ENCODE measurements at regions of chrX and their contacts with region 1.

Region 1: DNA sequence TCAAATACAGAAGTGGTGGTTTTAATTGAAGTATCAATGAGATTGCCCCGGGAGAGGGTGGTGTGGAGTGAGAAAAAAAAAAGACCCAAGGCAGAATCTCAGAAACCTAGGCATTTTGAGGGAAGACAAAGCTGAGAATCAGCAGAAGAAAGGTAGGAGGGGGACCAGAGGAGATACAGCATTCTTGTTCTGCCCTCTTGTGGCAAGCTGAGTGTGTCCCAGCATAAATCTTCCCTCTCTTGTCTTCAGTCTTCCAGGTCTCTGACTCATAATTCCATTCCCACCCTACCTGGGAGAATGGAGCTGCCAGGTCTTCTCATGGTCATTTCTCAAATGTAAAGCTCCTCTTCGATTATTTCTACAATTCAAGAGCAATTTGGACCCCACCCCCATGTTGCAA is 32.7 kb upstream of the MAGED1 start:
- DNase-seq: no peak
- H3K4me3 ChIP-seq: no peak overlapping the region
- H3K27ac ChIP-seq: no peak overlapping the region
- H3K27me3 ChIP-seq: no peaks in the 10 kb centered on the region
- CTCF ChIP-seq: peak; percentile 46

Region 2: DNA sequence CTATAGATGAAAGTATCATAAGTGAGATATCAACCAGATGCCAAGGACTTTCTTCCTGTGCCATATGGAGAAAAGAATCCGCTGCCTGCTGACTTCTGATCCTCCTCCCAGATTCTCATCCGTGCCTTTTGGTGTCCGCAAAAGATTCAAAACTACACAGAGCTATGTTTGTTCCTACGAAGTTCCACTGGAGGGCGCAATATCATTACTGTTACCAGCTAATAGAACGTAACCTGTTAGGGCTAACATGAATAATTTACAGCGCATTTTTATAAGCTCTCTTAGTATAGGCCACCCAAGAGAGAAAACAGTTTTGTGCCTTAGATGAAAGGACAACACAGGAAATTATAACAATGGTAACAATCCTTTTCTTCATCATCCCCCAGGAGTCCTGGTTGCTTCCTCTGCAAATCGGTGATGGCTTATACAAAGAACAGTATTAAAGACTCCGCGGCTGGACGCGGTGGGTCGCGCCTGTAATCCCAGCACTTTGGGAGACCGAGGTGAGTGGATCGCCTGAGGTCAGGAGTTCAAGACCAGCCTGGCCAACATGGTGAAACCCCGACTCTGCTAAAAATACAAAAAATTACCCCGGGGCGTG is 219.2 kb before region 1 on chrX:
- CTCF ChIA-PET with region 1: interaction called, 14 read pairs
- POLR2A ChIA-PET with region 1: no interaction called
- DNase-seq: peak; percentile 18
- H3K4me3 ChIP-seq: no peak overlapping the region
- H3K27ac ChIP-seq: no peak overlapping the region
- H3K27me3 ChIP-seq: no peaks in the 10 kb centered on the region
- CTCF ChIP-seq: peak; percentile 51

Region 3: DNA sequence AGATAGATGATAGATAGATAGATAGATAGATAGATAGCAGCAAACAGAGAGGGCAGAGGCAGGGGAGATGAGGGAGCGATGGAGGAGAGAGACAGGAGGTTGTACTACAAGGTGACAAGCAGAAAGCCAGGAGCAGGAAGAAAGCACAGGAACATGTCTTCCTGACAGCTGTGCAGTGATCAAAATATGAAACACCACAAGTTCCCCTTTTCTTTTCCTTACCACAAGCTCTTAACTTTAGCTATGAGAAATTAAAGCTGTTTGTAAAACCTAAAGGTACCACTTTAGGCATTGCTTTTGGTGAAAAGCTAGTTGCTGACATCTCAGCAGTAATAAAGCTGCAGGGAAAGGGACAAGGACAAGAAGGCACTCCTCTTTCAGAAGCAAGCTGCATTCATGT is 217.5 kb after region 1 on chrX:
- CTCF ChIA-PET with region 1: no interaction called
- POLR2A ChIA-PET with region 1: no interaction called
- DNase-seq: no peak
- H3K4me3 ChIP-seq: no peak overlapping the region
- H3K27ac ChIP-seq: no peak overlapping the region
- H3K27me3 ChIP-seq: peaks cover 3% of the 10 kb centered on the region
- CTCF ChIP-seq: no peak